Activated B cell treated with CpG ODN at 0.5 μM for 24 hours (primary cell): ENCODE measurements at regions of chr2 and their contacts with region 1.

Region 1: GRCh38 chr2:218710687-218711549 is at the start of gene TTLL4:
- DNase-seq: peak; percentile 98
- ATAC-seq: peak; percentile 97
- H3K4me3 Mint-ChIP-seq: peak within 1 kb of the TSS; percentile 91
- H3K27ac Mint-ChIP-seq: peak within 1 kb of the TSS; percentile 86
- H3K4me1 Mint-ChIP-seq: peaks cover 26% of the 10 kb centered on the region
- H3K27me3 Mint-ChIP-seq: no peaks in the 10 kb centered on the region
- CTCF ChIP-seq: no peak
- total RNA-seq, gene TTLL4: 36.0 and 37.2 TPM in 2 replicates

Region 2: GRCh38 chr2:218659258-218659987 is 51.5 kb before region 1 on chr2 and contains the starts of genes BCS1L and ZNF142:
- CTCF ChIA-PET with region 1: interaction called, 11 read pairs
- POLR2A ChIA-PET with region 1: interaction called, 17 read pairs
- intact Hi-C with region 1: loop called (anchors 1 kb)
- DNase-seq: peak; percentile 85
- ATAC-seq: peak; percentile 96
- H3K4me3 Mint-ChIP-seq: peak within 1 kb of the TSS; percentile 99
- H3K27ac Mint-ChIP-seq: peak within 1 kb of the TSS; percentile 93
- H3K4me1 Mint-ChIP-seq: peaks cover 31% of the 10 kb centered on the region
- H3K27me3 Mint-ChIP-seq: no peaks in the 10 kb centered on the region
- CTCF ChIP-seq: no peak
- total RNA-seq, gene BCS1L: 66.9 and 75.1 TPM in 2 replicates
- total RNA-seq, gene ZNF142: 44.9 and 63.6 TPM in 2 replicates

Region 3: DNA sequence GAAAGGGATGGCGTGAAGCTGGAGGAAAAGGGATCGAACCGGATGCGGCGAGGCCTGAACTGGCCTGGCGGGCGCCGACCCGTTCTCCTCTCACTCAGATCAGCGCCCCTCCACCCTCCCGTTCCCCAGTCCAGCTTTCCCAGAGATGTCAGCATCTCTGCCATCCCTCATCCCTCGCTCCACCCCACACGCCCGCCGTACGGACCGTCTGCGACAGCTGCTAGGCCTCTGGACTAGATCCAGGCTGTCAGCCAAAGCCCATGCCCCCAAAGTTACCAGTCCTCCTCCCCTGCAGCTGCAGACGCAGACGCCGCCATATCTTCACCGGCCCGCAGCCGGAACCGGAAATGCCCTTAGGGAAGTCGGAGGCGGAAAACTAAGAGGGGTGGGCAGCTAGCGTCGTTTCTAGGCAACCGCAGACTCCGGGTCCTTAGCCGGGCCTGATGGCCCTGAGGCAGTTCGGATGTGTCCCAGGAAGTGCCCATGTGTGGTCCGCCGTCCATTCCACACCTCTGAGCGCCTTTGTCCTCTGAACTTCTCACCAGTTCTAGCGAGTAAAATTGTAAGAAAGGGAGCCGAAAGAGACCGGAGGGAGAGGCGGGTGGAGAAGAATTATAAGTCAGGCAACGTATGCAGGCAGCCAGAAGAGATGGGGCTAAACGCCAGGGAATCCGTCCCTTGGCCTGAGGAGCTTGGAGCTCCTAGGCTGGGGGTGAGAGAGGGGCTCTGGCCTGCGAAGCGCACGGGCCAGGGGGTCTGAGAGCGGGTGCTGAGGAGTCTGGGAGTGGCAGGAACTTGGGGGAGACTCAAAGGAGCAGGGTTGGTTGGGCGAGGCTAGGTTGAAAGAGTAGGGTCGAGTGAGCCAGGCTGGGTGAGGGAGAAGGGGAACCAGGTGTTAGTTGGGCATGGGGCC is 39.0 kb before region 1 on chr2 and contains the starts of genes RNF25 and STK36:
- CTCF ChIA-PET with region 1: interaction called, 3 read pairs
- POLR2A ChIA-PET with region 1: interaction called, 12 read pairs
- intact Hi-C with region 1: loop called (anchors 1 kb)
- DNase-seq: peak; percentile 66
- ATAC-seq: peak; percentile 95
- H3K4me3 Mint-ChIP-seq: peak within 1 kb of the TSS; percentile 99
- H3K27ac Mint-ChIP-seq: peak within 1 kb of the TSS; percentile 97
- H3K4me1 Mint-ChIP-seq: peaks cover 21% of the 10 kb centered on the region
- H3K27me3 Mint-ChIP-seq: no peaks in the 10 kb centered on the region
- CTCF ChIP-seq: no peak
- total RNA-seq, gene RNF25: 29.7 and 35.1 TPM in 2 replicates
- total RNA-seq, gene STK36: 24.2 and 29.2 TPM in 2 replicates

Region 4: GRCh38 chr2:218834723-218835122 is 123.8 kb after region 1 on chr2:
- CTCF ChIA-PET with region 1: no interaction called
- POLR2A ChIA-PET with region 1: interaction called, 12 read pairs
- intact Hi-C with region 1: no loop called
- DNase-seq: no peak
- ATAC-seq: no peak
- H3K4me3 Mint-ChIP-seq: no peak overlapping the region
- H3K27ac Mint-ChIP-seq: no peak overlapping the region
- H3K4me1 Mint-ChIP-seq: no peaks in the 10 kb centered on the region
- H3K27me3 Mint-ChIP-seq: peaks cover 44% of the 10 kb centered on the region
- CTCF ChIP-seq: no peak

Region 5: DNA sequence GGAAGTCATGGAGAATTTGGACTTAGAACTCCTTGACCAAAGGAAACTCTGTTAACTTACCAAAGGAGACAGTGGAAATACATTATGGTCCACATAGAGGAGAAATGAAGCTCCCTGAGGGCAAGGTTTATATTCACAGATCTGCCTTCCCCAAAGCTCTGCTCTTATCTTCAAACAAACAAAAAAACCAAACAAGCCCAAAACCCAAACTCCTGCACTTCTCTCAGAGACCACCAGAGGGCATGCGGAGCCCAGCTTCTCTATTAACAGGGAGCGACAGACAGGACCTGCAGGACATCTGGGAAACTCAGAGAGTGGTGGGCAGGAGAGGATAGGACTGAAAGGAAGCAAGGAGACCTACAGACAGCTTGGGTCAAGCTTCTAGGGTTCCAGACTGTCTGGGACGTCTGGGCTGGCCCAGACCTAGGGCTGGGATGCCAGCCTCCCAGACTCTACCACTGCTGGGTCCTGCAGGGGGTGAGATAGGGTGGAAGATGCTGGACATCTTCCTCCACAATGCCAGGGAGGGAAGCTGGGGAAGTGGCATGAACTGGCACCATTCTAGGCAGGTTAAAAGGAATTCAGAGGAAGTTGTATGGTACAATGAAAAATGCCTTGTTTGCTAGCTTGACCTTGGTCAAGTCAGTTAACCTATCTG is 165.8 kb after region 1 on chr2:
- CTCF ChIA-PET with region 1: no interaction called
- POLR2A ChIA-PET with region 1: no interaction called
- intact Hi-C with region 1: loop called (anchors 1 kb)
- DNase-seq: peak; percentile 58
- ATAC-seq: no peak
- H3K4me3 Mint-ChIP-seq: no peak overlapping the region
- H3K27ac Mint-ChIP-seq: no peak overlapping the region
- H3K4me1 Mint-ChIP-seq: peaks cover 55% of the 10 kb centered on the region
- H3K27me3 Mint-ChIP-seq: peaks cover 19% of the 10 kb centered on the region
- CTCF ChIP-seq: peak; percentile 65

Region 6: DNA sequence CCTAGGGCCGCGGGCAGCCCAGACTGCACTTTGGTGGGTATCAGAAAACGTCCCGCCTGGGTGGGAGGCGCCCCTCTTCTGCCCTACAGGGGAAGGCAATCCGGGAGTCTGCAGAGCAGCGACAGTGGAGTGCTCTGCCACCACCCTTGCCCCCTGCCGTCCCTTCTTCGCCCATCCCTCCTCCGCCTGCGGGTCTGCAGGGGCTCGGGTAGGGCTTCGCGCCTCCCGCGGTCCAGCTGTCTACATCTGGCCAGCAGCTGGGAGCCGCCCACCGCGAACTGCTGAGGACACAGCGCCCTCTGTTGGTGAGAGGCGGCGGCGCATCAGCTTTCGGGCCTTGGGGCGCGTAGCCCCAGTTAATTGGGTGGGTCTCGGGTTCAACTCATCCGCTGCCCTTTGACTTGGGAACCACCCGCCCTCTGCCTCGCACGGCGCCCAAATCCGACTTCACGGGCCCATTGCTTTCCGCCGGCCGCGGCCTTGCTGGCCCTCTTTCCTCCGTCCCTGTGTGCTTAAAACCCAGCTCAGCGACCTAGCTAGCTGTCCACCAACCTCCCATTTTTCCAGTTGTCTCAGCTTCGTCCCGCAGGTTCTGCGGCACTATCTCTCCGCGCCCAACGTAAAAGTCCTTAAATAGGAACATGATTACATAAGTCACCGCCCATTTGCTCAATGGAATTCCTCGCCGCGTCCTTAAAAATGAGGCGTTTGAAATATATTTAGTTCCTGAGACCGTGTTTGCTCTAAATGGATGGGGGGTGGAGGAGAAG is 187.4 kb after region 1 on chr2:
- CTCF ChIA-PET with region 1: interaction called, 6 read pairs
- POLR2A ChIA-PET with region 1: interaction called, 5 read pairs
- intact Hi-C with region 1: loop called (anchors 2 kb)
- DNase-seq: peak; percentile 88
- ATAC-seq: peak; percentile 22
- H3K4me3 Mint-ChIP-seq: peak overlapping the region; percentile 85
- H3K27ac Mint-ChIP-seq: peak overlapping the region; percentile 84
- H3K4me1 Mint-ChIP-seq: peaks cover 47% of the 10 kb centered on the region
- H3K27me3 Mint-ChIP-seq: peaks cover 22% of the 10 kb centered on the region
- CTCF ChIP-seq: peak; percentile 97

Region 7: DNA sequence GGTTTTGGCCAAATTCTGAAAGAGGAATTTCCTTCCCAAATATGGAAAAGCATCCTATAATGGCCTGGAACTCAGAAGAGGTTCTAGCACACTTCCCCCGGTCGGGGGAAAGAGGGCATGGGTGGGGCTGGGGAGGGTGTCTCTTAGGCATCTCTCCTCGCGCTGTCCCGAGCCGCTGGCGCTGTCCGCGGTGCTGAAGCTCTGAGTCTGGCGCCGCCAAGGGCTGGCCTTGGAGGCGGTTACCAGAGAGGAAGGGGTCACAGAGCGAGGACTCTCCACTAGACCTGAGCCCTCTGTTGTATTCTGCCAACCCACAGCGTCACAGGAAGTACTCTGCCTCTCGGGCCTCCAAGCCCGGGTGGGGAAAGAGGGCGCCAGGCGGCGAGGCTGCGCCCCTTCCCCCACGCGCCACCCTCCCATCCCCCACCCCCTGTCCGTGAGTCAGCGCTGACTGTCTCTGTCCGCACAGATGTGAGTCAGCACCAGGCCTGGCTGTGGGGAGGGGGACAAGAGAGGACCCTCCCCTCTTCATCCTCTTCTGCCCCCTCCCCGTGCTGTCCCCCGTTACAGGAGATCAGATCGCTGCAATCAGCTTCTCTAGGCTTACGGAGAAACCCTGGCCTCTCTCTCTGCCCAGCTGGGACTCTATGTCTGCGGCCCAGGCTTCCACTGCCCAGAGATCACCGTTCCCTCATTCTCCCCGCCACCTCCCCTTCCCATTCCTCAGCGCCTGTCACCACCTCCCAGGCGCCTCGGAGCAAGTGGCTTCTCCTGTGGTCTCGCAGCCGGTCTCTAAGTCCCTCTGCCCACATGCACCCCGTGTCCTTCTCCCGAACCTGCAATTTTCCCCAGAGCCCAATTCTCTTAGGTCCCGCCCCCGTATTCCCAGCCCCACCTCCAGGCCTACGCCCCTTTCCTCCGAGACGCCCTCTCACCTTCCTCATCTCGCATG is 597.5 kb after region 1 on chr2:
- CTCF ChIA-PET with region 1: no interaction called
- POLR2A ChIA-PET with region 1: no interaction called
- intact Hi-C with region 1: no loop called
- DNase-seq: peak; percentile 61
- ATAC-seq: peak; percentile 77
- H3K4me3 Mint-ChIP-seq: no peak overlapping the region
- H3K27ac Mint-ChIP-seq: no peak overlapping the region
- H3K4me1 Mint-ChIP-seq: peaks cover 3% of the 10 kb centered on the region
- H3K27me3 Mint-ChIP-seq: peaks cover 64% of the 10 kb centered on the region
- CTCF ChIP-seq: no peak